CD4-positive, alpha-beta memory T cell (primary cell): ENCODE measurements at regions of chr6 and their contacts with region 1.

Region 1: DNA sequence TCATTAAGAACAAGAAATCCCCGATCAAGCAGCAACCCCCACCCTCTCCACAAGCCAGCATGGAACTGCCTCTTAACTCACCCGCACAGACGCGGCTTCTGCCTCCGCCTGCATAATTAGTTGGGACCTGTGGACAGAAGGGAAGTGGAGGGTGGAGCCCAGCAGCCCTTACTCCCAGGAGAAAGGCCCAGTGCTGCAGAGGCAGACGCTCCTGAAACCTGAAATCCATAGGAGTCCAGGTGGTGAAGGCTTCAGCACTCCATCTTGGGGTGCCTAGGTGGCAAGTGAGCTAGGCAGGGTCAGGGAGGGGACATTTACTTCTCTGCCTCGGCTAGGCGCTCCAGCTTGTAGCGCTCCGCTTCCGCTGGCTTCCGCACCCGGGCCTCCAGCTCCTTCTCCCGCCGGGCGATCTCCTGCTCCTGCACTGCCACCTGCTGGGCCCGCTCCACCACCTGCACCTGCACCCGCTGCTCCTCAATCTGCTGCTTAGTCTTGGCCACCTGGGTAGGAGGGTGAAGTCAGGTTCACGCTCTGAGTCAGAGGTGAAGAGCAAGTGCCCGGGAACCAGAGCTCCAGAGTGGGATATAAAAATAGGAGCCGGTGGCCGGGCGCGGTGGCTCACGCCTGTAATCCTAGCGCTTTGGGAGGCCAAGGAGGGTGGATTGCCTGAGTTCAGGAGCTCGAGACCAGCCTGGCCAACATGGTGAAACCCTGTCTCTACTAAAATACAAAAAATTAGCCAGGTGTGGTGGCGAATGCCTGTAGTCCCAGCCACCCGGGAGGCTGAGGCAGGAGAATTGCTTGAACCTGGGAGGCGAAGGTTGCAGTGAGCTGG is 10.7 kb downstream of the TUBB start:
- DNase-seq: peak; percentile 81 to 86 (median 82)
- H3K4me3 ChIP-seq: peak overlapping the region in 1 of 2 donors; percentile 35
- H3K4me3 Mint-ChIP-seq: peak overlapping the region in 6 of 8 donors; percentile 43 to 72 (median 58)
- H3K27ac ChIP-seq: no peak overlapping the region
- H3K27ac Mint-ChIP-seq: peak overlapping the region in 5 of 7 donors; percentile 69 to 84 (median 73)
- H3K4me1 ChIP-seq: peaks cover 23% of the 10 kb centered on the region
- H3K4me1 Mint-ChIP-seq: peaks cover 16 to 40% (median 31%) of the 10 kb centered on the region in 4 donors
- H3K27me3 ChIP-seq: no peaks in the 10 kb centered on the region
- H3K27me3 Mint-ChIP-seq: no peaks in the 10 kb centered on the region

Region 2: GRCh38 chr6:30483677-30484279 is 247.0 kb before region 1 on chr6:
- CTCF ChIA-PET with region 1: interaction called, 42 read pairs
- POLR2A ChIA-PET with region 1: interaction called, 4 read pairs
- intact Hi-C with region 1: no loop called
- DNase-seq: peak in 4 of 5 donors; percentile 44 to 57 (median 48)
- H3K4me3 ChIP-seq: no peak overlapping the region
- H3K4me3 Mint-ChIP-seq: no peak overlapping the region
- H3K27ac ChIP-seq: no peak overlapping the region
- H3K27ac Mint-ChIP-seq: peak overlapping the region in 2 of 7 donors; percentile 8 to 29
- H3K4me1 ChIP-seq: peaks cover 24% of the 10 kb centered on the region
- H3K4me1 Mint-ChIP-seq: peaks cover 27 to 42% (median 31%) of the 10 kb centered on the region in 4 donors
- H3K27me3 ChIP-seq: peaks cover 22% of the 10 kb centered on the region
- H3K27me3 Mint-ChIP-seq: peaks cover 18 to 22% of the 10 kb centered on the region in 2 donors

Region 3: GRCh38 chr6:30600451-30600961 is 130.3 kb before region 1 on chr6:
- CTCF ChIA-PET with region 1: interaction called, 25 read pairs
- POLR2A ChIA-PET with region 1: interaction called, 4 read pairs
- intact Hi-C with region 1: no loop called
- DNase-seq: no peak
- H3K4me3 ChIP-seq: no peak overlapping the region
- H3K4me3 Mint-ChIP-seq: no peak overlapping the region
- H3K27ac ChIP-seq: no peak overlapping the region
- H3K27ac Mint-ChIP-seq: peak overlapping the region in 2 of 7 donors; percentile 41 to 64
- H3K4me1 ChIP-seq: no peaks in the 10 kb centered on the region
- H3K4me1 Mint-ChIP-seq: peaks cover 7 to 26% (median 17%) of the 10 kb centered on the region in 4 donors
- H3K27me3 ChIP-seq: no peaks in the 10 kb centered on the region
- H3K27me3 Mint-ChIP-seq: no peaks in the 10 kb centered on the region

Region 4: DNA sequence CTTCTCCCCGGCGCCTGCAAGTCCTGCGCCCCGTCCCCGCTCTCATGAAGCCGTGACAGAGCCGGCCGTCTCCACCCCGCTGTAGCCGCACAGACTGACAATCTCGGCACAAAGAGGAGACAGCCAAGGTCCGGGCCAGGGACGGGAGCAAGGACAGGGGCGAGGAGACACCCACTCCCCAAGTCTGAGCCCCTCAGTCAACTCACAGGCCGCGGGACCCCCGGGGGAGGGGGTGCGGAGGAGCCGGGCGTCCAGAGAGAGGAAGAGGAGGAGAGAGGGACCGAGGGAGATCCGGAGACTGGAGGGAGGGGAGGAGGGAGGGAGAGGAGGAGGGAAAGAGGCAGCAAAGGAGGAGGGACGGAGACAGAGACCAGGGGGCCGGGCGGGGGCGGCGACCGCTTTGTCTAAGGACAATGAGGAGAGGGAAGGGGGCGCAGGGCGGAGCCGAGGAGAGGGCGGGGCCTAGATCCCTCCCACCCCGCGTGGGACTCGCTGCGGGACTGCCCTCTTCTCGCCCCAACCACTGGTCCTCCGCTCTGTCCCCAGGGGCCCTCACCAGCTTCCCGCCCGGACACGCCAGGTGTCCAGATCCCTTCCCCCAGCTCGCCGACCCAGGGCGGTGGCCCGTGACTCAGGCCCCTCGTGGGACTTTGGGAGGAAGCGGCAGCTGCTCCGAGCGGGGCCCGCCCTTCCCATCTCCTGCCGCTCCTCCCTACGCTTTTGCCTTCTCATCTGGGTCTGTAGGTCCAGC is 43.7 kb before region 1 on chr6:
- CTCF ChIA-PET with region 1: interaction called, 865 read pairs
- POLR2A ChIA-PET with region 1: interaction called, 1,474 read pairs
- intact Hi-C with region 1: no loop called
- DNase-seq: peak in 4 of 5 donors; percentile 43 to 83 (median 45)
- H3K4me3 ChIP-seq: peak overlapping the region; percentile 93 to 100
- H3K4me3 Mint-ChIP-seq: peak overlapping the region; percentile 97 to 100 (median 99)
- H3K27ac ChIP-seq: peak overlapping the region; percentile 94
- H3K27ac Mint-ChIP-seq: peak overlapping the region; percentile 94 to 99 (median 96)
- H3K4me1 ChIP-seq: peaks cover 40% of the 10 kb centered on the region
- H3K4me1 Mint-ChIP-seq: peaks cover 32 to 71% (median 40%) of the 10 kb centered on the region in 4 donors
- H3K27me3 ChIP-seq: no peaks in the 10 kb centered on the region
- H3K27me3 Mint-ChIP-seq: no peaks in the 10 kb centered on the region

Region 5: DNA sequence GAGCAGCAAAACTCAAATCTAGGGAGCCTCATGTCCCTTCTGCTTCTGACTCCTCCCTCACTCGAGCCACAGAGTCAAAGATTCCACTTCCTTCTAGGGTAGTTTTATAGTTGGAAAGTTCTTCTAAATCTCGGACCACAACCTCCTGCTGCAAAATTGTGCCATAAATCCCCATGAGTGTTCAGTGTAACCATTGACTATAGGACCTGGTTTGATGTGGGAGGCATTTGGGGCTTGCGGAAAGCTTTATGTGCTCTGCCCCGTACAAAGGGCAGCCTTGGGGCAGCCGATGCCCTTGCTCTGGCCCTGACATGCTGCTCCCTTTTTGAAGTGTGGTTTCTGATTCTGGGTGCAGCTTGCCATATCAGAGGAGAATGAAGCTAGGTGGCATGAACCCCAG is 57.1 kb after region 1 on chr6:
- CTCF ChIA-PET with region 1: interaction called, 15 read pairs
- POLR2A ChIA-PET with region 1: interaction called, 3 read pairs
- intact Hi-C with region 1: no loop called
- DNase-seq: peak in 1 of 5 donors; percentile 38
- H3K4me3 ChIP-seq: no peak overlapping the region
- H3K4me3 Mint-ChIP-seq: peak overlapping the region in 6 of 8 donors; percentile 5 to 68 (median 46)
- H3K27ac ChIP-seq: no peak overlapping the region
- H3K27ac Mint-ChIP-seq: peak overlapping the region in 3 of 7 donors; percentile 9 to 59 (median 26)
- H3K4me1 ChIP-seq: peaks cover 30% of the 10 kb centered on the region
- H3K4me1 Mint-ChIP-seq: peaks cover 30 to 57% (median 46%) of the 10 kb centered on the region in 4 donors
- H3K27me3 ChIP-seq: no peaks in the 10 kb centered on the region
- H3K27me3 Mint-ChIP-seq: peaks cover 0 to 2% of the 10 kb centered on the region in 2 donors

Region 6: DNA sequence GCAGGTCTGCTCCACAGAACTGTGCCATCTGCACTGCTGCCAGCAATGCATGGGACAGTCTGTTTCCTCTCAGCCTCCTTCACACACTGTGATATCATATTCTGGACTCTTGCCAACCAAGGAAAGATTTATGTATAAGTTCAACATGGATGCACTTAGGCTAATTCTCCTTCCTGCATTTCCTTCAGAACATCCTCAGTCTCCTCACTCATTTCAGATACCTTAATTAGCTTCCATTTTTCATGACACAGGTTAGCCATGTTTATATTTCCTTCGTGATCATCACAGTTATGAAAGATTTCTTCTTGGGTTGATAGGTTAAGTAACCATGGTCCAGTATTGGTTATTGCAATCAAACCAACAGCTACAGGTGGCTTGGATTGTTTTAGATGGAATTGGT is 107.1 kb after region 1 on chr6:
- CTCF ChIA-PET with region 1: no interaction called
- POLR2A ChIA-PET with region 1: no interaction called
- intact Hi-C with region 1: no loop called
- DNase-seq: no peak
- H3K4me3 ChIP-seq: no peak overlapping the region
- H3K4me3 Mint-ChIP-seq: no peak overlapping the region
- H3K27ac ChIP-seq: no peak overlapping the region
- H3K27ac Mint-ChIP-seq: no peak overlapping the region
- H3K4me1 ChIP-seq: peaks cover 30% of the 10 kb centered on the region
- H3K4me1 Mint-ChIP-seq: peaks cover 18 to 30% (median 21%) of the 10 kb centered on the region in 4 donors
- H3K27me3 ChIP-seq: no peaks in the 10 kb centered on the region
- H3K27me3 Mint-ChIP-seq: no peaks in the 10 kb centered on the region

Region 7: DNA sequence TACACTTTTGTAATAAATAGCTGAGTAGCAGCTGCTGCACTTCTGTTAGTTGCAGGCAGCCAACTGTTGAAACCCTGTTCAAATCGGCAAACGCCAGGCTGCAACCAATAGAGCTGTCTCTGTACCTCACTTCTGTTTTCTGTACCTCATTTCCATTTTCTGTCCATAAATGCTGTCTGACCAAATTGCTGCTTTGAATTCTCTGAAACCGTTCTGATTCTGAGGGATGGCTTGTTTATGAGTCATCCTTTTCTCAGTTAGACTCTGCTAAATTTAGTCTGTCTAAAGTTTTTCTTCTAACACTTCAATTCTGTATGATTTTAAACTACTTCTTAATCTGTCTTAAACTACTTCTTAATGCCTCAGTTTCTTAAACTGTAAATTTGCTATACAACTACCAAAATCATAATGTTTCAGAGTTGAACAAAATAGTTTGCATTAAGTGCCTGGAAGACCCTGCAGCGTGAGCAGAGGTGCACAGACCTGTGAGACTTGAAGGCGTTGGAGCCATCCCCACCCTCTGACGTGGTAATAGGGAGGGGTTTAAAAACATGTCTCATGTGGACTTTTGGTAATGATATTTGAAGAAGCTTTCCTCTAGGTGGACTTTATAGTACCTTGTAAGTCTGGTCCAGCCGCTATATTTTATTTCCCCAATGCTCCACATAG is 1666.6 kb after region 1 on chr6:
- CTCF ChIA-PET with region 1: no interaction called
- POLR2A ChIA-PET with region 1: no interaction called
- intact Hi-C with region 1: no loop called
- DNase-seq: no peak
- H3K4me3 ChIP-seq: no peak overlapping the region
- H3K4me3 Mint-ChIP-seq: no peak overlapping the region
- H3K27ac ChIP-seq: no peak overlapping the region
- H3K27ac Mint-ChIP-seq: peak overlapping the region in 1 of 7 donors; percentile 30
- H3K4me1 ChIP-seq: no peaks in the 10 kb centered on the region
- H3K4me1 Mint-ChIP-seq: no peaks in the 10 kb centered on the region
- H3K27me3 ChIP-seq: no peaks in the 10 kb centered on the region
- H3K27me3 Mint-ChIP-seq: peaks cover 13 to 21% of the 10 kb centered on the region in 2 donors